Activated CD4-positive, alpha-beta T cell treated with anti-CD3 and anti-CD28 coated beads, Interleukin-2, amount 10 ng/mL, durations not matched to agents 24 days and 14 days (primary cell): ENCODE measurements at regions of chr3 and their contacts with region 1.

Region 1: GRCh38 chr3:31754575-31755278 is 222.0 kb downstream of the STT3B start:
- DNase-seq: peak; percentile 65
- H3K4me3 Mint-ChIP-seq: peak overlapping the region; percentile 68
- H3K27ac Mint-ChIP-seq: peak overlapping the region; percentile 95
- H3K4me1 Mint-ChIP-seq: peaks cover 49% of the 10 kb centered on the region
- H3K27me3 Mint-ChIP-seq: no peaks in the 10 kb centered on the region

Region 2: DNA sequence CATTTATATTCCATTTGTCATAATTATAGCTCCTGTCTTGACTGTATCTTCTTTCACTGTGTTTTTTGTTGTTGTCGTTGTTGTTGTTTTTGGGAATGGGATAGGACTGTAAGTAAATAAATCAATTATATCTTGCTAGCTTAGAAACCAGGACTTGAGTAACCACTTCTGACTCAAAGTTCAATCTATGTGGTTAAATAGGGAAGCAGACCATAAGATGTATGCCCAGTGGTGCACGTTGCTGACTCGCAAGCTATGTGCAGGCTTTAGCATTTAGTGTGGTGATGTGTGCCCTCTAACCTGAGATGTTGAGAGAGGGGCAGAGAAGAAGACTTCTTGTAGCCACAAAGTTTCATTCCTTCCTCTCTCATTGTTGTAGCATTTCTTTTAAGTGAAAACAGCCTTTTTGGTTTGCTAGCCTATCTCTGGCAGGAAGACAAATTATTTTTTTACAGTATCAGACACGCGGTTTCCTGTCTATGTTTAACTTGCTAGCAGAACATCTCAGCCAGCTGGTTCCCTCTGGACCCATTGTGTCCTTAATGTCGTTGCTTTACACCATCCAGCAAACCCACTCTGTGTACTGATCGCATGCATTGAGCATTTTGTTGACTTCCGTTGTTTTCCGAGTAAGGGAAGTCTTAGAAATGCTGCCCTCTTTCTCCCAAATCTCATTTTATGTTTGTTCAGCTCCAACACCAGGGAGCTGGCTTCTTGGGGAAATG is 1096.2 kb before region 1 on chr3:
- intact Hi-C with region 1: loop called (anchors 5 kb)
- DNase-seq: peak; percentile 85
- H3K4me3 Mint-ChIP-seq: peak overlapping the region; percentile 84
- H3K27ac Mint-ChIP-seq: peak overlapping the region; percentile 97
- H3K4me1 Mint-ChIP-seq: peaks cover 85% of the 10 kb centered on the region
- H3K27me3 Mint-ChIP-seq: no peaks in the 10 kb centered on the region

Region 3: DNA sequence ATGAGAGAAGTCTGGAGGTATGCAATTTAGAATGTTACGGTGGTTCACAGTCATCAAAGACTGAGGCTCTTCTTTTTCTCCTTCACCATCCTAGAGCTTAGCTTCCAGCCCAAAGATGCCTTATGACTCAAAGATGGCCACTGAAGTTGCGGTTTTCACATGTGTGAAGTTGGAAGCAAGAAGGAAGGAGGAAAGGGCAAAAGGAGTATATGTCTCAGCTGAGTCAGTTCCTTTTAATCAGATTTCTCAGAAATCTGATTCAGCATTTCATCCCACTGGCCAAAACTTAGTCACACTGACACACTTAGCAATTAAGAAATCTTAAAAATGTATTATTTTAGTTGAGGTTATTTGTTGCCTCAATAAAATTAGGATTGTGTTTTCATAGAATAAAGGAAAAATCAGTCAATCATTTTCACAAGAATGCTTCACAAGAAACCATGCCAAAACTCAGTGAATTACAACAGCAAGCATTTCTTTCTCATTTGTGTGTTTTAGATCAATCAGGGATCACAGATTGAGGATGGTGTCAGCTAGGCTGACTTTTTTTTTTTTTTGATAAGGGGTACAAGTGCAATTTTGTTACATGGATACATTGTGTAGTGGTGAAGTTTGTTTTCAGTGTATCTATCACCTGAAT is 649.2 kb before region 1 on chr3:
- intact Hi-C with region 1: loop called (anchors 10 kb)
- DNase-seq: peak; percentile 66
- H3K4me3 Mint-ChIP-seq: no peak overlapping the region
- H3K27ac Mint-ChIP-seq: no peak overlapping the region
- H3K4me1 Mint-ChIP-seq: peaks cover 39% of the 10 kb centered on the region
- H3K27me3 Mint-ChIP-seq: no peaks in the 10 kb centered on the region

Region 4: GRCh38 chr3:31456373-31456772 is 298.4 kb before region 1 on chr3:
- intact Hi-C with region 1: loop called (anchors 10 kb)
- DNase-seq: no peak
- H3K4me3 Mint-ChIP-seq: no peak overlapping the region
- H3K27ac Mint-ChIP-seq: no peak overlapping the region
- H3K4me1 Mint-ChIP-seq: no peaks in the 10 kb centered on the region
- H3K27me3 Mint-ChIP-seq: peaks cover 2% of the 10 kb centered on the region

Region 5: GRCh38 chr3:31596176-31596575 is 158.6 kb before region 1 on chr3:
- intact Hi-C with region 1: no loop called
- DNase-seq: no peak
- H3K4me3 Mint-ChIP-seq: no peak overlapping the region
- H3K27ac Mint-ChIP-seq: peak overlapping the region; percentile 65
- H3K4me1 Mint-ChIP-seq: peaks cover 33% of the 10 kb centered on the region
- H3K27me3 Mint-ChIP-seq: no peaks in the 10 kb centered on the region

Region 6: GRCh38 chr3:31704591-31705179 is 50.0 kb before region 1 on chr3:
- intact Hi-C with region 1: loop called (anchors 2 kb)
- DNase-seq: no peak
- H3K4me3 Mint-ChIP-seq: no peak overlapping the region
- H3K27ac Mint-ChIP-seq: peak overlapping the region; percentile 50
- H3K4me1 Mint-ChIP-seq: peaks cover 11% of the 10 kb centered on the region
- H3K27me3 Mint-ChIP-seq: no peaks in the 10 kb centered on the region

Region 7: DNA sequence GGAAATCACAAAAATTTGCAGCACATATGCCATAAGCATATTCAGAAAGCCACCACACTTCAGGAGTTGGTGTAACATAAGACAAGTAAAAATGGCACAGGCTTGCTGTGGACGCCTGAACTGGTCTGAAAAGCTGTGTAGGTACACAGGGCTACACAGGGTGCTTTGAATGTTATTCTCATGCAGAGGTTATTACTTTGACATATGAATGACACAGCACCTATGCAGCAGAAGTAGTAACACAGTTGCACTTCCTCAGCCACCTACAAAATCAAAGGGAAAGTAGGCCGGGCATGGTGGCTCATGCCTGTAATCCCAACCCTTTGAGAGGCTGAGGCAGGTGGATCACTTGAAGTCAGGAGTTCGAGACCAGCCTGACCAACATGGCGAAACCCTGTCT is 171.8 kb after region 1 on chr3:
- intact Hi-C with region 1: loop called (anchors 2 kb)
- DNase-seq: no peak
- H3K4me3 Mint-ChIP-seq: no peak overlapping the region
- H3K27ac Mint-ChIP-seq: peak overlapping the region; percentile 86
- H3K4me1 Mint-ChIP-seq: peaks cover 30% of the 10 kb centered on the region
- H3K27me3 Mint-ChIP-seq: no peaks in the 10 kb centered on the region

Region 8: GRCh38 chr3:32117324-32117723 is 362.6 kb after region 1 on chr3:
- intact Hi-C with region 1: loop called (anchors 10 kb)
- DNase-seq: no peak
- H3K4me3 Mint-ChIP-seq: no peak overlapping the region
- H3K27ac Mint-ChIP-seq: no peak overlapping the region
- H3K4me1 Mint-ChIP-seq: peaks cover 32% of the 10 kb centered on the region
- H3K27me3 Mint-ChIP-seq: no peaks in the 10 kb centered on the region